Posterior vena cava (tissue), 2 donors: ENCODE measurements at regions of chr19 and their contacts with region 1.

Region 1: GRCh38 chr19:20339444-20339843 is 172.4 kb downstream of the ZNF486 start:
- DNase-seq: no peak

Region 2: GRCh38 chr19:20367811-20368294 is 28.4 kb after region 1 on chr19:
- intact Hi-C with region 1: loop called in 1 of 2 experiments (anchors 2 kb)
- DNase-seq: no peak